Mucosa of descending colon (tissue), 3 donors: ENCODE measurements at regions of chr22 and their contacts with region 1.

Region 1: GRCh38 chr22:41022470-41023298 is 69.7 kb upstream of the EP300 start:
- DNase-seq: peak; percentile 96
- ATAC-seq: peak; percentile 92
- H3K4me3 ChIP-seq: peak overlapping the region; percentile 33
- H3K4me1 ChIP-seq: peaks cover 6% of the 10 kb centered on the region
- CTCF ChIP-seq: no peak

Region 2: GRCh38 chr22:40922484-40923303 is 100.0 kb before region 1 on chr22:
- intact Hi-C with region 1: no loop called
- DNase-seq: peak in 1 of 3 donors; percentile 62
- ATAC-seq: peak; percentile 88
- H3K4me3 ChIP-seq: no peak overlapping the region
- H3K4me1 ChIP-seq: peaks cover 4% of the 10 kb centered on the region
- CTCF ChIP-seq: peak; percentile 29

Region 3: DNA sequence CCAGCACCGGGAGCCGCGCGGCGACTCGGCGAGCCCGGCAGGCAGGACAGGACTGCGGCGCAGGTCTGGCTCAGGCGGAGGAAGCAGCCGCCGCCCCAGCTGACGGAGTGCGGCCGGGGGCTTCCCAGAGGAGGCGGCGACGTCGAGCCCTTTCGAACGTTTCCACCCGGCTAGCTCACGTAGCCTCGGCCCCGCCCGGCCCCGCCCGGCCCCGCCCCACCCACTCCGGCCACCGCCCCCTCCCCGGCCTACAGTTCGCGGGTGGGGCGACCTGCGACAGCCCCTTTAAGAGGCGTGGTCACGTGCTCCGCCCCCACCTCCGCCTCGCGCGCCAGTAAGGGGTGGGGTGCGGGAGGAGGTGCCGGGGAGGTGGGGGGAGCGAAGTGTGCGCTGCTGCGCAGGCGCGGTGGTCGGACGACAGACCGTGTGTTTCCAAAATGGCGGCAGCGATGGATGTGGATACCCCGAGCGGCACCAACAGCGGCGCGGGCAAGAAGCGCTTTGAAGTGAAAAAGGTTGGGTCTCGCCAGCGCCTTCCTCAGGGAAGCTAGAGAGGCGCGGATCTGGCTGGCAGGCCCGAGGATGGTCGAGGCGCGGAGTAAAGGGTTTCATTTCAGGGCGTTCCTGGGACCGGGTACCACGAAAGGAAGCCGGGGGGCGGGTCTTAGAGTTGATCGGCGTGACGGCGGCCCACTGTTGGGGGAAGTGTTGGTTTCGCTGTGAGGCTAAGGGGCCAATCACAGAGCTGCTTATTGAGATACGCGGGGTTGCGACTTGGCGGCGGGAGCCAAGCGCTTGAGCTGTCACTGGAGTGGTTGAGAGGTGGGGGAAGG is 71.5 kb before region 1 on chr22 and contains the start of gene RBX1:
- intact Hi-C with region 1: loop called in 1 of 2 experiments (anchors 10 kb)
- DNase-seq: peak; percentile 99 to 100 (median 99)
- ATAC-seq: peak; percentile 95
- H3K4me3 ChIP-seq: peak within 1 kb of the TSS; percentile 66
- H3K4me1 ChIP-seq: peaks cover 10% of the 10 kb centered on the region
- CTCF ChIP-seq: no peak
- total RNA-seq, gene RBX1: 29.3 to 40.7 (median 38.2) TPM